Posterior vena cava (tissue), 2 donors: ENCODE measurements at regions of chr10 and their contacts with region 1.

Region 1: GRCh38 chr10:75662715-75663114 is 231.3 kb downstream of the LRMDA start:
- DNase-seq: no peak

Region 2: GRCh38 chr10:75350791-75351190 is 311.9 kb before region 1 on chr10:
- intact Hi-C with region 1: no loop called
- DNase-seq: no peak

Region 3: DNA sequence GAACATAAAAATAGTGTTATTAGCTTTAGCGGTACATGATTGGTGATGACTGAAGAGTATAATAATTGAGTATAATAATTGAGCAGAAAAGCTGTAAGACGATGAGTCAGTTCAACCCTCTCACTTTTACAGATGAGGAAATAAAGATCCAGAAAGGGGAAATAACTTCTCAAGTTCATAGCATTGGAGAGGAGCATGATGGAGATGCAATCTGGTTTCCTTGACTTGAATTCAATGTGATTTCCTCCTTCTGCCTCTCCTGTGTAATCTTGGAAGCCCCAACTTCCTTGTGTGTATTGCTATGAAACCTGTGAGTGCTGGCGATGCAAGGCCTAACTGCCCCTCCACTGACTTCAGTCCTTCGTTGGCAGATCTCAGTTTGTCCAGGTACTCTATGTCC is 33.8 kb after region 1 on chr10:
- intact Hi-C with region 1: loop called in 1 of 2 experiments (anchors 1 kb)
- DNase-seq: no peak

Region 4: DNA sequence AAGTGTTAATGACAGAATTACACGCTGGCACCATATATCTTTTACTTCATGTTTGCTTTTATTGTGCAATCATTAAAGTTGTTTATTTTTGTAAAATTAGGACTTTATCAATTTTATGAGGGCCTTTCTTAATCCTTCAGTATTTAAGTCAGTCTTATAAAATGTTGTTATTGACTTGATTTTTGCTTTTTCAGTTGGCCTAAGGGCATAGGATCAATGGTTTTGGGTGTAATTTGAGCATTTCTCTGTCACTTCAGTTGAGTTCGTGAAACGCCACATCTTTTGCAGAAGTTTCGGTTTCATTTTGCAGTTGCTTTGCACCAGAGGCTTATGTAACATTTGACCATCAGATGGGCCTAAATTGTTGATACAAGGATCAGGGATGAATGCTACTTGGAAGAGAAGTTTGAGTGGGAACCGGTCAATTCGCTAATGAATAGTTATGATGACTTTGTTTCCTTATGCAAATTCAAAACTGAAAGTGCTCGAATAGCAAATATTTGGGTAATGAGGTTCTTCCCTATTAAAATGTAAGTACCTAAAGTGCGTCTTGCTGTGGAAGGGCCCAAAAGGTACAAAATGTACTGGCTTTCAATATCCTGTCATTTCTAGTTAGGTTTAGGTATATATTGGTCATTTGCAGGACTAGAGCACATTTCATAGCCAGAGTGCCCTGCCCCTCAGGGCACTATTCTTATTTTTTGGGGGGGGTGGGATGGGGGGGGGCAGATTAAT is 109.6 kb after region 1 on chr10:
- intact Hi-C with region 1: loop called in 1 of 2 experiments (anchors 10 kb)
- DNase-seq: no peak